ENCODE measurements at regions of chr14 and their contacts with region 1.

Region 1: DNA sequence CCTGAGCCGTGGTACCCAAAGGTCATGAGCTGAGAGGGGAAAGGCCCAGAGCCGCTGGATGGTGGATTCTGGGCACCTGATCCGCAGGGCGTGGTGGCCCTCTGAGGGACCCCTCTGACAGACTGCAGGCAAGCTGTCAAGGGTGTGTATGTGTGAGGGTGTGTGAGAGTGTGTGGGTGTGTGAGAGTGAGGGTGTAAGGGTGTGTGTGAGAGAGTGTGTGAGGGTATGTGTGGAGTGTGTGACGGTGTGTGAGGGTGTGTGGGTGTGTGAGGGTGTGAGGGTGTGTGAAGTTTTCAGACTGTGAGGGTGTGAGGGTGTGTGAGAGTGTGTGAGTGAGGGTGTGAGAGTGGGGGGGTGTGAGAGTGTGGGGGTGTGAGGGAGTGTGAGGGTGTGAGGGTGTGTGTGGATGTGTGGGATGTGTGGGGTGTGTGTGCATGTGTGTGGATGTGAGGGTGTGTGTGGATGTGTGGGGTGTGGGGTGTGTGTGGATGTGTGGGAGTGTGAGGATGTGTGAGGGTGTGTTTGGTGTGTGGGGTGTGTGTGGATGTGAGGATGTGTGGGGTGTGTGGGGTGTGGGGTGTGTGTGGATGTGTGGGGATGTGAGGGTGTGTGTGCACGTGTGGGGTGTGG is 156.7 kb downstream of the TMEM121 start:
- DNase-seq: peak in 1 of 9 experiments; percentile 45
- ATAC-seq: no peak
- H3K4me3 ChIP-seq: no peak overlapping the region
- H3K4me3 Mint-ChIP-seq: no peak overlapping the region
- H3K27ac ChIP-seq: no peak overlapping the region
- H3K27ac Mint-ChIP-seq: no peak overlapping the region
- H3K4me1 ChIP-seq: no peaks in the 10 kb centered on the region
- H3K4me1 Mint-ChIP-seq: no peaks in the 10 kb centered on the region
- H3K27me3 ChIP-seq: no peaks in the 10 kb centered on the region
- H3K27me3 Mint-ChIP-seq: no peaks in the 10 kb centered on the region
- CTCF ChIP-seq: no peak

Region 2: DNA sequence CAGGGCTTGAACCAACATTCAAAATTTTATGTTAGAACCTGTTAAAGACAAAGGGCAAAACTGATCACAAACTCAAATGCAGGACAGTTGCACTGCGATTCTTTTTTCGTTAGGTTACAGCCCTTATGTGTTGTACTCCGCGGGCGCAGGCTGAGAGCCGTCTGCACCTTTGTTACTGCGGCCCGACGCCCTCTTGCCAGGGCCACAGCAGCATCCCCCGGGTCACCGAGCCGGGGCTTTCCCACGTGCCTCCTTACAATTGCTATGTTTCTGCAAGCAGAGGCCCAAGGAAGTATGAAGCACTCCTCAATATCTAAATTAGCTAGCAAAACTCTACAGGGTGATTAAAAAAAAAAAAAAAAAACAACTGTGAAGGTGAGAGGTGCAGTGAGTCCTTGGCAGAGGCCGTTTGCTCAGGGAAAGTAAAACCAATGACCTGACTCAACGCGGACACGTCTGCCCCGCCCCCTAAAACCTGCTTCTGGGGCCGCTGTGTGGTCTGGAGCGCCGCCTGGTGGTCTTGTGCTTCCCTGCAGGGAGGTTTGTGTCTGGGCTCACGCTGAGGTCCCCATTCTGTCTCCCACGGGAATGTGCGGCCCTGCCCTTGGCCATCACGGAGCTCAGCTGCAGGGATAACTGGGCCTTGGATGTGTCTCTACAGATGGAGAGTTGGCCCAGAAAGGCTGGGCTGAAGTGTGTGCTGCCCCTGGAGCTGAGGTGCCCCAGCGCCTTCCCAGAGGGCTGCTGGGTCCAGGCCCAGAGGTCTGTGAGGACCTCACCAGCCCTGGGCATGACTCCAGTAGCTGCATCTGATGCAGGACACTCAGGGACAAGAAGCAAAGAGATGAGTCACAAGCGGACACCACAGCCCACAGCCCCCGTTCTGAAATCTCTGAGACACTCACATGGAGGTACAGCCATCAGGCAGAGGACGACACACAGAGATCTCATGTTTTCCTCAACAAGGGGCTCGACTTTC is 261.9 kb after region 1 on chr14:
- CTCF ChIA-PET with region 1: interaction called, 4 read pairs
- POLR2A ChIA-PET with region 1: no interaction called
- intact Hi-C with region 1: loop called in 1 of 2 experiments (anchors 5 kb)
- DNase-seq: peak; percentile 51 to 87 (median 80)
- ATAC-seq: peak; percentile 79
- H3K4me3 ChIP-seq: no peak overlapping the region
- H3K4me3 Mint-ChIP-seq: no peak overlapping the region
- H3K27ac ChIP-seq: no peak overlapping the region
- H3K27ac Mint-ChIP-seq: no peak overlapping the region
- H3K4me1 ChIP-seq: no peaks in the 10 kb centered on the region
- H3K4me1 Mint-ChIP-seq: peaks cover 13% of the 10 kb centered on the region
- H3K27me3 ChIP-seq: no peaks in the 10 kb centered on the region
- H3K27me3 Mint-ChIP-seq: peaks cover 7% of the 10 kb centered on the region
- CTCF ChIP-seq: peak; percentile 88

Region 3: DNA sequence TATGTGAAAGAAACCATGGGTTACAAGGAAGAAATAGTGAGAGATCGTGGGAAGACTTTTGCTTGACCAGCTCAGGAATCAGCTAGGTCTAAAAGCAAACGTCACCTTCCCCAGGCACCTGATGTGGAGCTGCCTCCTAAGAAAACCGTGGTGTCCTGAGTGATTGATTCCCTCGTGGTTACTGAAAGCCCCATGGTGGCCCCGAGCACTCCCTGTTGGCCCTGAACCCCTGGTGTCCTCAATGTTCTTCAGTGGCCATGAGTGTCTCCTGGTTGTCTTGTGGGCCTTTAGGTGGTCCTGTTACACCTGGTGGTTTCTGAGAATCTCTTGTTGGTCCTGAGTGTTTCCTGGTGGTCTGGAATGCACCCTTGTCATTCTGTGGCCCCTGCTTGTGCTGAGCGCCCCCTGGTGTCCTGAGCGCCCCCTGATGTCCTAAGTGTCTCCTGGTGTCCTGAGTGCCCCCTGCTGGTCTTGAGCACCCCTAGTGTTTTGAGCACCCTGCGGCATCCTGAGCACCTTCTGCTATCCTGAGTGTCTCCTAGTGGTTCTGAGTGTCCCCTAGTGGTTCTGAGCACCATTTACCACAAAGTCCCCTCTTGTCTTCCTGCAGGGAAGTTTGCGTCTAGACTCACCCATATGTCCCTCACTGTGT is 362.0 kb after region 1 on chr14:
- CTCF ChIA-PET with region 1: no interaction called
- POLR2A ChIA-PET with region 1: no interaction called
- intact Hi-C with region 1: loop called in 1 of 2 experiments (anchors 5 kb)
- DNase-seq: peak; percentile 58 to 87 (median 82)
- ATAC-seq: peak; percentile 99
- H3K4me3 ChIP-seq: no peak overlapping the region
- H3K4me3 Mint-ChIP-seq: no peak overlapping the region
- H3K27ac ChIP-seq: no peak overlapping the region
- H3K27ac Mint-ChIP-seq: no peak overlapping the region
- H3K4me1 ChIP-seq: no peaks in the 10 kb centered on the region
- H3K4me1 Mint-ChIP-seq: no peaks in the 10 kb centered on the region
- H3K27me3 ChIP-seq: no peaks in the 10 kb centered on the region
- H3K27me3 Mint-ChIP-seq: peaks cover 10% of the 10 kb centered on the region
- CTCF ChIP-seq: peak; percentile 52